ENCODE measurements at regions of chr5 and their contacts with region 1.

Region 1: GRCh38 chr5:87069974-87070624 is 197.6 kb upstream of the RASA1 start:
- DNase-seq: no peak
- ATAC-seq: peak; percentile 46; the same call in 1 of the 3 replicates
- H3K4me3 ChIP-seq: no peak overlapping the region
- H3K27ac ChIP-seq: no peak overlapping the region
- H3K4me1 ChIP-seq: no peaks in the 10 kb centered on the region
- H3K27me3 ChIP-seq: no peaks in the 10 kb centered on the region
- CTCF ChIP-seq: peak; percentile 35; the same call in 1 of the 2 replicates
- EP300 ChIP-seq: no peak
- POLR2A ChIP-seq: no peak
- RAD21 ChIP-seq: no peak

Region 2: GRCh38 chr5:87339986-87340385 is 269.9 kb after region 1 on chr5:
- CTCF ChIA-PET with region 1: no interaction called
- POLR2A ChIA-PET with region 1: no interaction called
- in situ Hi-C with region 1: no loop called
- intact Hi-C with region 1: loop called (anchors 10 kb)
- DNase-seq: no peak
- ATAC-seq: no peak
- H3K4me3 ChIP-seq: no peak overlapping the region
- H3K27ac ChIP-seq: no peak overlapping the region
- H3K4me1 ChIP-seq: no peaks in the 10 kb centered on the region
- H3K27me3 ChIP-seq: no peaks in the 10 kb centered on the region
- CTCF ChIP-seq: no peak
- EP300 ChIP-seq: no peak
- POLR2A ChIP-seq: no peak
- RAD21 ChIP-seq: no peak

Region 3: DNA sequence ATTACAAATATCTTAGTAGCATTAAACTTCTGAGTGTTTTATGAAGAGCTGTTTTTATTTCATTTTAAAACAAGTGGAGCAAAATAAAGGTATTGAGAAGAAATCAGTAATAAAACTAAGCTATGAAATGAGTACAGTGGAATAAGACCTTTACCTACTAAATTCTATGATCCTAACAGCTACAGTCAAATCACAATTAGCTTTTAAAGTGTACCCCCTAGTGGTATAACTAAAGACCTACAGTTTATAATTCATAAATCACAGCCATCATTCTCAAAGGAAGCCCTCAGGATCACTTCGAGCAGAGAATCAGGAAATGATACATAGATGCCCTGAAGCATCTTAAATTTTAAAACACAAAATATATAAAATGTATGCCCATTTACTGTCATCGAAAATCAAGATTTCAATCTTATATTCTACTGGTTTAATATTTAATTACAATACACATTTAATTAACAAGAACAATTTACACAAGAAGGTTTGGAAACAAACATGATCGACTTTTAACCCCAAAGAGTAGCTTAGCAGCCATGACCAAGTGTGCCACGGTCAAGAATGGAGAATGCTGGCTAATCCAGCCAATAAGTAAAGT is 330.3 kb after region 1 on chr5:
- CTCF ChIA-PET with region 1: no interaction called
- POLR2A ChIA-PET with region 1: no interaction called
- in situ Hi-C with region 1: no loop called
- intact Hi-C with region 1: loop called (anchors 1 kb)
- DNase-seq: peak; percentile 13
- ATAC-seq: peak; percentile 75
- H3K4me3 ChIP-seq: no peak overlapping the region
- H3K27ac ChIP-seq: no peak overlapping the region
- H3K4me1 ChIP-seq: peaks cover 4% of the 10 kb centered on the region; the same call in 1 of the 2 replicates
- H3K27me3 ChIP-seq: no peaks in the 10 kb centered on the region
- CTCF ChIP-seq: peak; percentile 53
- EP300 ChIP-seq: no peak
- POLR2A ChIP-seq: no peak
- RAD21 ChIP-seq: no peak

Measured in HepG2 (cell line).